Colonic mucosa (tissue), 4 donors: ENCODE measurements at regions of chr11 and their contacts with region 1.

Region 1: GRCh38 chr11:6505577-6506240 is 8.6 kb downstream of the DNHD1 start:
- DNase-seq: no peak
- H3K4me3 ChIP-seq: no peak overlapping the region
- H3K27ac ChIP-seq: no peak overlapping the region
- H3K4me1 ChIP-seq: no peaks in the 10 kb centered on the region
- H3K27me3 ChIP-seq: no peaks in the 10 kb centered on the region
- CTCF ChIP-seq: peak; percentile 74

Region 2: GRCh38 chr11:5891216-5891800 is 614.4 kb before region 1 on chr11:
- intact Hi-C with region 1: no loop called
- DNase-seq: no peak
- H3K4me3 ChIP-seq: no peak overlapping the region
- H3K27ac ChIP-seq: no peak overlapping the region
- H3K4me1 ChIP-seq: no peaks in the 10 kb centered on the region
- H3K27me3 ChIP-seq: no peaks in the 10 kb centered on the region
- CTCF ChIP-seq: no peak

Region 3: GRCh38 chr11:6132431-6132830 is 373.3 kb before region 1 on chr11:
- intact Hi-C with region 1: no loop called
- DNase-seq: no peak
- H3K4me3 ChIP-seq: no peak overlapping the region
- H3K27ac ChIP-seq: no peak overlapping the region
- H3K4me1 ChIP-seq: no peaks in the 10 kb centered on the region
- H3K27me3 ChIP-seq: no peaks in the 10 kb centered on the region
- CTCF ChIP-seq: no peak

Region 4: DNA sequence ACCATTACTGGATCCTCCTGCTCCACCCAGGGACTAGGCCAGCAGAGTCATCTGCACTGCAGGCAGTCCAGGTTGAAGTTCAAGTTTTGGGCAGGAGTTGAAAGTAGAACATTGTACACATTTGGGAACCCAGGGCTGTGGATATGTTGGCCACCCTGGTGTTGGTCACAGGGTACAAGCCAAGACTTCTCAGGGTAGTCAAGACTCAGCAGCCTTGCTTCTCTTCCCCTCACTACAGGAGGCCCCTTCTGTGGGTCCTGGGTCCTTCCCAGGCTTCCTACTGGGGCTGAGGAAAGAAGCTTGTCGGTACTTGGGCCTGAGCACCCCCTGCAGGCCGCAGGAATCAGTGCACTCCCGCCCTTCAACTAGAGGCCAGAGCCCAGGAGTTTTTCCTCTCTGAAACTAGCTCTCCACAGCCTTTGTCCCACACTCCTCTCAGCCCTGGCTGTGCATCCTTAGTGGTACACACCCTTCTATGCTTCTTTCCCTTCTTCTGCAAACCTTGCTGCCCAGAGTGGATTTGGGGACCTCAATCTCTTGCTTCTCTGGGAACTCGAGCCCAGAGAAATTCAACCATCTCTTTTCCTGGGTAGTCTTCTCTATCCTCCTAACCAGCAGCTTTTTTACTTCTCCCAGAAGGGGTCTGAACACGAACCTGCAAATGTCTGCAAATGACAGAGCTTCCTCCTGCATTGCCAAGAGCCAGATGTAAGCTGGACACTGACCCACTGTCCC is 62.3 kb before region 1 on chr11:
- intact Hi-C with region 1: loop called (anchors 2 kb)
- DNase-seq: peak; percentile 55
- H3K4me3 ChIP-seq: no peak overlapping the region
- H3K27ac ChIP-seq: no peak overlapping the region
- H3K4me1 ChIP-seq: no peaks in the 10 kb centered on the region
- H3K27me3 ChIP-seq: no peaks in the 10 kb centered on the region
- CTCF ChIP-seq: peak; percentile 86